Heart left ventricle (tissue), 16 donors: ENCODE measurements at regions of chr4 and their contacts with region 1.

Region 1: GRCh38 chr4:20773144-20773997 is 73.1 kb downstream of the PACRGL start:
- DNase-seq: peak in 3 of 5 donors; percentile 7 to 57 (median 20)
- ATAC-seq: peak in 3 of 4 donors; percentile 44 to 71 (median 56)
- H3K4me3 ChIP-seq: no peak overlapping the region
- H3K27ac ChIP-seq: no peak overlapping the region
- H3K4me1 ChIP-seq: no peaks in the 10 kb centered on the region
- H3K27me3 ChIP-seq: no peaks in the 10 kb centered on the region
- CTCF ChIP-seq: peak; percentile 24 to 70 (median 47)
- POLR2A ChIP-seq: no peak

Region 2: DNA sequence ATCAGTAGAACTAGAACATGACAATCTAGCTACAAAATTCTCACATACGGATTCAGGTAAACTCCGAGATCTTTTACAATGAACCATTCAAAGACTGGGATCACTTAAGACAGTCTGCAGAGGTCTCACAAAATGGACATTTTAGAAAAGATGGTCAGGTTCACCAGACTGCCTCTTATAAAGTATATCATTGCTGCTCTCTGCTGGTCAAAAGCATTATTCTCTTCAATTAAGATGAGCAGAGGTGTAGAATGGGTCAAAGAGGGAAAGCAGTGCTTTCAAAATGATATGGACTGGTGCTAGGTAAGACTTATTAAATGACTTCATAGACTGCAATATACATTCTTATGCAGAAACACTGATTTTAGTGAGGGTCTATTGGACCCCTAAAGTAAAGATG is 361.6 kb after region 1 on chr4:
- intact Hi-C with region 1: loop called in 7 of 10 experiments (anchors 5 to 10 kb)
- DNase-seq: no peak
- ATAC-seq: peak in 1 of 4 donors; percentile 31
- H3K4me3 ChIP-seq: no peak overlapping the region
- H3K27ac ChIP-seq: no peak overlapping the region
- H3K4me1 ChIP-seq: no peaks in the 10 kb centered on the region
- H3K27me3 ChIP-seq: no peaks in the 10 kb centered on the region
- CTCF ChIP-seq: peak in 6 of 12 donors; percentile 7 to 33 (median 24)
- POLR2A ChIP-seq: no peak

Region 3: GRCh38 chr4:21469438-21470300 is 696.3 kb after region 1 on chr4:
- intact Hi-C with region 1: loop called in 3 of 10 experiments (anchors 5 to 10 kb)
- DNase-seq: no peak
- ATAC-seq: no peak
- H3K4me3 ChIP-seq: no peak overlapping the region
- H3K27ac ChIP-seq: no peak overlapping the region
- H3K4me1 ChIP-seq: no peaks in the 10 kb centered on the region
- H3K27me3 ChIP-seq: no peaks in the 10 kb centered on the region
- CTCF ChIP-seq: peak in 8 of 12 donors; percentile 8 to 47 (median 30)
- POLR2A ChIP-seq: no peak

Region 4: DNA sequence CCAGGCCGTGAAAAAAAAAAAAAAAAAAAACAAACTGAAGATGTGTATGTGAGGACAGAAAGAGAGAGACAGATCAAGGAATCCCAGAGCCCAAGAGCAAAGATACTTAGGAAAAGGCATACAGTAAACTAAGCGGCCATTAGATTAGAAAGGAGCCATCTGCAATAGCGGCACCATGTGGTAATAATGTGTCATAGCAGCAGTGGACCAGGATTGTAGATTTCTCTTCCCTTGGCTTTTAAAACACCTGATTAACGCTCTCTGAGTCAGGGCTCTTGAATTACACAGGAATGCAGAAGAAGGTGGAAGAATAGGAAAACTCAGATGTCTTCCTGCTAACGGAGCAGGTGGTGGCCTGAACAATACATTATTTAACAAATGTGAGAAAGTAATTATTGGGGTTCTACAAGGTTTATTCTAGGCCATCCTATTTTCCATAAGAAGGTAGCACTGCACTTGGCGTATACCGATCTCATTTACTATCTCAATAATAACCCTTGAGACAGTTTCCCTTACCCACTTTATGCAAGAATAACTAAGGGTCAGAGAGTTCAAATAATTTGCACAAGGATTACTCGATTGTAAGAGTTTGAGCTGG is 992.5 kb after region 1 on chr4:
- intact Hi-C with region 1: loop called in 6 of 10 experiments (anchors 5 to 10 kb)
- DNase-seq: no peak
- ATAC-seq: peak in 2 of 4 donors; percentile 50 to 53
- H3K4me3 ChIP-seq: no peak overlapping the region
- H3K27ac ChIP-seq: no peak overlapping the region
- H3K4me1 ChIP-seq: peaks cover 0 to 2% (median 0%) of the 10 kb centered on the region in 12 donors
- H3K27me3 ChIP-seq: peaks cover 0 to 8% (median 0%) of the 10 kb centered on the region in 9 donors
- CTCF ChIP-seq: peak; percentile 59 to 86 (median 78)
- POLR2A ChIP-seq: no peak